ENCODE measurements at regions of chr2 and their contacts with region 1.

Region 1: GRCh38 chr2:218186355-218186766 is 19.6 kb upstream of the CXCR1 start:
- DNase-seq: peak; percentile 56 to 72
- H3K4me3 ChIP-seq: no peak overlapping the region
- H3K27ac ChIP-seq: no peak overlapping the region
- H3K4me1 ChIP-seq: no peaks in the 10 kb centered on the region; the same call in 1 of the 2 replicates
- H3K27me3 ChIP-seq: 0 out of 2 replicates have a peak, but pooled peaks cover 6% of the 10 kb centered on the region
- CTCF ChIP-seq: peak; percentile 87

Region 2: DNA sequence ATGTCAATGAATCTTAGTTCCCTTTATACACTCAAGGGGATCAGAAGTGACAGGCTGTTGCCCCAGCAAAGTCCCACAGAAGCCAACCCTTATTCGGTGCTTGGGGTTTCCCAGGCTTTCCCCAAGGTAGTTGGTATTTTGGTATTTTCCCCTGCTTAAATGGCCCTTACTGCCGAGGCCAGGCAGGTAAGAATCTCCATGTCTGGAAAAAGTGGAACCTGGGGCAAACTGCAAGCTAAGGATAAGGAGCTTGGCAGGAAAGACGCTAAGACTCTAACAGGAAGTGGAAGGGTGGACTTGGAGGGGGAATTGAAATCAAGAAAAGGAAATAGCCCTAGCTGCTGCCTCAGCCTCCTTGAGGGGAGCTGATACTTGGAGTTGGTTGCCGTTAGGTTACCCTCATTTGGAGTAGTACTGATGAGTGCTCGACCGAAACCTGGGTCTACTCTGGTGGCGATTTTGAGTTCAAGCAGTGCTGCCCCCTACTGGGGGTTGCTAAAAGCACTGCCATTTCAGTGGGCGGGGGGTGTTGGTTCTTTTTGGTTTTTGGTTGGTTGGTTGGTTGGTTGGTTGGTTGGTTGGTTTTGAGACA is 71.1 kb after region 1 on chr2:
- CTCF ChIA-PET with region 1: interaction called, 8 read pairs
- POLR2A ChIA-PET with region 1: no interaction called
- intact Hi-C with region 1: loop called (anchors 5 kb)
- DNase-seq: no peak
- H3K4me3 ChIP-seq: no peak overlapping the region
- H3K27ac ChIP-seq: no peak overlapping the region
- H3K4me1 ChIP-seq: no peaks in the 10 kb centered on the region
- H3K27me3 ChIP-seq: no peaks in the 10 kb centered on the region
- CTCF ChIP-seq: peak; percentile 68

Region 3: GRCh38 chr2:218466016-218466521 is 279.7 kb after region 1 on chr2:
- CTCF ChIA-PET with region 1: no interaction called
- POLR2A ChIA-PET with region 1: no interaction called
- intact Hi-C with region 1: loop called (anchors 10 kb)
- DNase-seq: no peak
- H3K4me3 ChIP-seq: no peak overlapping the region
- H3K27ac ChIP-seq: no peak overlapping the region
- H3K4me1 ChIP-seq: no peaks in the 10 kb centered on the region
- H3K27me3 ChIP-seq: no peaks in the 10 kb centered on the region
- CTCF ChIP-seq: peak; percentile 77

Region 4: GRCh38 chr2:218648088-218648786 is 461.9 kb after region 1 on chr2:
- CTCF ChIA-PET with region 1: no interaction called
- POLR2A ChIA-PET with region 1: no interaction called
- intact Hi-C with region 1: loop called (anchors 5 kb)
- DNase-seq: peak; percentile 46 to 54
- H3K4me3 ChIP-seq: no peak overlapping the region
- H3K27ac ChIP-seq: no peak overlapping the region
- H3K4me1 ChIP-seq: peaks cover 12% of the 10 kb centered on the region; the same call in 1 of the 2 replicates
- H3K27me3 ChIP-seq: no peaks in the 10 kb centered on the region
- CTCF ChIP-seq: peak; percentile 87